Activated CD4-positive, alpha-beta T cell treated with anti-CD3 and anti-CD28 coated beads, Interleukin-2, amount 10 ng/mL, durations not matched to agents 24 days and 14 days (primary cell): ENCODE measurements at regions of chr20 and their contacts with region 1.

Region 1: DNA sequence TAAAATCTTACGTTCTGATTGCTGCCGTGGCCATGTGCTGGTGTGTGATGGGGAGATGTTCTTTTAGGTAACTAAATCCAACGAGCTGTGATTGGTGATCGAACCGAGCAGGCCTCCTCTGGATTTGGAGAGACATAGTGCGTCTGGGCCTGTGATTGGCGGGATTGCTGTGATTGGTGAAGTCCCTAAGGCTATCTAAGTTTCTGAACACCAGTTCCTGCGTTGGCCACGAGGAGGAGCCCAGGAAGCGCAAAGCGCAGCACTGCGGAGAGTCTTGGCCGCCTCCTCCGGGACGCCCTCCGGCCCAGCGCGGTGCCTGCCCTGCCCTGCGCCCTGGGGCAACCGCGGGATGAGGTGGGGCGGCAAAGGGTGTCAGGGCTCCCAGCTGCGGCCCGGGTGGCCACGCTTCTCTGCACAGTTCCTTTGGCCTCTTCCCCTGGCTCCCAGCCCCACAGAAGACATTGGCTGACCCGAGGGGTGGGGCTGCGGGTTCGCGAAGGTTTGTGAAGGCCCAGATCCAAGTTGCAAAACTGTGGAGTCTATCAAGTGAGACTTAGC is 33.0 kb downstream of the HNF4A start:
- DNase-seq: peak; percentile 91
- H3K4me3 Mint-ChIP-seq: no peak overlapping the region
- H3K27ac Mint-ChIP-seq: no peak overlapping the region
- H3K4me1 Mint-ChIP-seq: peaks cover 3% of the 10 kb centered on the region
- H3K27me3 Mint-ChIP-seq: peaks cover 6% of the 10 kb centered on the region

Region 2: DNA sequence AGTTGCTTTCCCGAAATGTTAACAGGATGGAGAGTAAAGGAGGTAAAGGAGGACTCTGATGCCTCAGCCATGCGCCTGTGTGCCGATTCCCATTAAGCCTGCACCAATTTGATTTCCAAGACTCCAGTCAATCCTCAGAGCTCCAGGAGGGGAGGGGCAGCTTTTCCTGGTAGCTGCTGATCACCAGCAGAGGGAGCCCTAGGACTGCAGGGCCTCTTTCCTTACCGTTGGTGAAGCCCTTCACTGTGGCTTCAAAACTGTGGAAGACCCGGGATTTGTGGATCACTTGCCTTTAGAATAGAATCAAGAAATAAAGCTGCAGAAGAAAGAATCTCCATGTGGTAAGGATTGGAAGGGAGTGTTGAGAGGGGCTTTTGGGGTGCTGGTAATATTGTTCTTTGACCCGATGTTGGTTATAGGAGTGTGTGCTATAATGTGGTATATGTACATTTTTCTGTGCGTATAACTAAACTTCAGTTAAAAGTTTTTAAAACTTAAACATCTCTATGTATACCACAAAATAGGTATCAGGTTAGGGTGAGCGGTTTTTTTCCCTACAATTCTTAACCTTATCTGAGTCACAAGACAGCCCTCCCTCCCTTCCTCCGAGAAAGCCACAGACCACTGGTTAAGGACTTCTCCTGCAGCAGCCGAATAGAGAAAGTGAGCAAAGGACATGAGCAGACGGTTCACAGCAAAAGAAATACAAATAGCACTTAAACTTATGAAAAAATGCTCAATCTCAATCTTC is 171.0 kb before region 1 on chr20:
- intact Hi-C with region 1: loop called (anchors 1 kb)
- DNase-seq: peak; percentile 92
- H3K4me3 Mint-ChIP-seq: peak overlapping the region; percentile 77
- H3K27ac Mint-ChIP-seq: peak overlapping the region; percentile 63
- H3K4me1 Mint-ChIP-seq: peaks cover 30% of the 10 kb centered on the region
- H3K27me3 Mint-ChIP-seq: no peaks in the 10 kb centered on the region

Region 3: GRCh38 chr20:44370639-44371220 is 17.8 kb before region 1 on chr20:
- intact Hi-C with region 1: no loop called
- DNase-seq: no peak
- H3K4me3 Mint-ChIP-seq: no peak overlapping the region
- H3K27ac Mint-ChIP-seq: no peak overlapping the region
- H3K4me1 Mint-ChIP-seq: no peaks in the 10 kb centered on the region
- H3K27me3 Mint-ChIP-seq: peaks cover 11% of the 10 kb centered on the region

Region 4: DNA sequence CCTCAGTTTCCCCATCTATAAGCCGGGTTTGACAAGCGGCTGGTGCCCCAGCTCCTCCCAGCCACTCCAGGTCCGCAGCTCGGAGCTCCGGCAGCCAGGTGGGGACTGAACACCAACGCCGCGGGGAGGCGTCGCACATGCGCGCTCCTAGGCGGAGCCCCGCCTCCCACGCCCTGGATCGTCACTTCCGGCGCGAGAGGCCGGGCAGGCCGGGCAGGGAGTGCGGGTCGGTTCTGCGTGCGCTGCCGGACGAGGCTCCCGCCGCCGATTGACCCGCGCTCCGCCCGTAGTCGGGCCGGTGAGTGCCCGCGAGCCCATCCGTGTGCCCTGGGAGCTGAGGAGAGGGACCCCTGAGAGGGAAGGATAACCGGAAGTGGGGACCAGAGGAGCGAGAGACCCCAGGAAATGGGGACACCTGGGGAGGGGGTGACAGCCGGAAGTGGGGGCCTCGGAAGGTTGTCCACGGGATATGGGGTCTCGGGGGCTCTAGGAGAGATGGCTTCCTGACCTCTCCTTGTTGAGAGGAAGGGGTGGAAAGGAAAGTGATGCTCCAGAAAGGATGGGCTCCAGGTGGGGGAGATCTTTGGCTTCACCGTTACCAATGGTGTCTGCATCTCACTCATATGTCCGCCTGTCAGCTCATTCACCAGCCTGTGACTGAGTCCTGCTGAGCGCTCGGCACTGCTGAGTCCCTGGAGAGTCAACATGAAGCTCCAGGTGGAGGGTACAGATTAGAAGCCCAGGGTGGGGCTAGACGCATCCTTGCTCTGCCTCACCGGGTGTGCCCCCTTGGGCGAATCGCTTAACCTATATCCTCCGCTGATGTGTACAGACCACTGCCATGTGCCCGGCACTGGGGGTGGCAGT is 87.4 kb after region 1 on chr20 and contains the start of gene TTPAL:
- intact Hi-C with region 1: loop called (anchors 10 kb)
- DNase-seq: peak; percentile 98
- H3K4me3 Mint-ChIP-seq: peak within 1 kb of the TSS; percentile 99
- H3K27ac Mint-ChIP-seq: peak within 1 kb of the TSS; percentile 99
- H3K4me1 Mint-ChIP-seq: peaks cover 12% of the 10 kb centered on the region
- H3K27me3 Mint-ChIP-seq: no peaks in the 10 kb centered on the region
- total RNA-seq, gene TTPAL: 22.6 and 23.2 TPM in 2 replicates

Region 5: DNA sequence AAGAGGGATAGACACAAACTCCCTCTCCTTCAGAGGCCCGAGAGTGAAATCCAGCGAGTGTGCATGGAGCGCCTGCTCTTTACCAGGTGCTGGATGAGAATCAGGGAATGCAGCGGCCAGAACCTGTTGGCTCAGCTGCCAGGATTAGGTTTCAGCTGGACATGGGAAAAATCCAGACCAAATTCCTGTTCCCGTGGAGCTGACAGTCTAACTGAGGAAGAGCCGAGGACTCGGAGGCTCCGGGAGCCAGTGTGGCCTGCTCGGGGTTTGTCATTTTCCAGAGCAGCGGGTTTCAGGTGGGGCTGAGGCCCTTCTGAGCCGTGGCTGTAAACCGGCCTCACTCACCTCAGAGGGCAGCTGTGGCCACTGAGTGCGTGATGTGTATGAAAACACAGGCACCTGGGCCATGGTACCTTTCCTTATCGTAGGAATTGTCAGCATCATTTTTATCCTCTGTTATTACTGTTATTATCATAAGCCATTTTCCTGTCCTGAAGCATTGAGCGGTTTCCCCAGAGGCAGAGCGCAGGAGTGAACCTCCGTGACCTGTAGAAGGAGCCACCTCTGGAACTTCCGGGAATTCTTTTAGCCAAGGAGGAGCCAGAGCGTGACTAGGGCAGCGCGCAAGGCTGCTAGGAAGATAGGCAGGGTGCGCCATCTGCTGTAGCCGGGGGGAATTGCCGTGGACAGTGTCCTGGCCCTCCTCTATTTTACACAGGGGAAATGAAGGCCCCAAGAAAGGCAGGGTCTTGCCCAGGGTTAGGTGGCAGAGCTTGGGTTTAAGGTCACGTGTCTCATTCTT is 221.2 kb after region 1 on chr20:
- intact Hi-C with region 1: loop called (anchors 1 kb)
- DNase-seq: peak; percentile 95
- H3K4me3 Mint-ChIP-seq: peak overlapping the region; percentile 64
- H3K27ac Mint-ChIP-seq: peak overlapping the region; percentile 82
- H3K4me1 Mint-ChIP-seq: peaks cover 8% of the 10 kb centered on the region
- H3K27me3 Mint-ChIP-seq: no peaks in the 10 kb centered on the region

Region 6: GRCh38 chr20:44683263-44684046 is 294.9 kb after region 1 on chr20:
- intact Hi-C with region 1: loop called (anchors 10 kb)
- DNase-seq: peak; percentile 85
- H3K4me3 Mint-ChIP-seq: no peak overlapping the region
- H3K27ac Mint-ChIP-seq: no peak overlapping the region
- H3K4me1 Mint-ChIP-seq: peaks cover 7% of the 10 kb centered on the region
- H3K27me3 Mint-ChIP-seq: peaks cover 2% of the 10 kb centered on the region

Region 7: DNA sequence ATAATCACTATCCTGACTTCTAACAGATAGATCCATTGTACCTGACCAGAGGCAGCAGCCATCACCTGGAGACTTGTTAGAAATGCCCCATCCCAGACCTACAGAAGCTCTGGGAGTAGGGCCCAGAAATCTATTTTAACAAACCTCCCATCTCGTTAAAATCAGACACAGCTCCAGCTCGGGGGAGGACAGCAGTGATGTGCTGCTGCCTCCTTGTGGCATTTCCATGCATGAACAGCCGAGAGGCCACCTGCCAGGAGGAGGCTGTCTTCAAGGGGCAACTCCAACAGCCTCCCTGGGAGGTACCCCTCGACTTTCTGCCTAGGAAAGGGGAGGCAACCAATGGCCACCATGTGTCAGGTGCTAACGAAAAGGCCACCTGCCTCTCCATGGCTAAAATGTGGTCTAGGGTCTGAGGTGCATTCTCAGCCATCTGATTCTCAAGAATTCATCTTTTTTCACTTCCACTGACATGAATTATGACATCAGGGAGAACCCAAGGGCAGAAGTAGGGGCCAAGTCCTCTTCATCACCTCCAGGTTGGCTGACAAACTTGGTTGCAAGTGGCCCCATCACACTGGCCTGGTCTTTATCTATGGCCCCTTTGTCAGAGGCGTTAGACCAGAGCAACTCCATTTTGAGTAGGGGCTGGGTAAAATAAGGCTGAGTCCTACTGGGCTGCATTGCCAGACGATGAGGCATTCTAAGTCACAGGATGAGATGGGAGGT is 345.0 kb after region 1 on chr20:
- intact Hi-C with region 1: loop called (anchors 2 kb)
- DNase-seq: peak; percentile 90
- H3K4me3 Mint-ChIP-seq: no peak overlapping the region
- H3K27ac Mint-ChIP-seq: no peak overlapping the region
- H3K4me1 Mint-ChIP-seq: peaks cover 24% of the 10 kb centered on the region
- H3K27me3 Mint-ChIP-seq: no peaks in the 10 kb centered on the region

Region 8: DNA sequence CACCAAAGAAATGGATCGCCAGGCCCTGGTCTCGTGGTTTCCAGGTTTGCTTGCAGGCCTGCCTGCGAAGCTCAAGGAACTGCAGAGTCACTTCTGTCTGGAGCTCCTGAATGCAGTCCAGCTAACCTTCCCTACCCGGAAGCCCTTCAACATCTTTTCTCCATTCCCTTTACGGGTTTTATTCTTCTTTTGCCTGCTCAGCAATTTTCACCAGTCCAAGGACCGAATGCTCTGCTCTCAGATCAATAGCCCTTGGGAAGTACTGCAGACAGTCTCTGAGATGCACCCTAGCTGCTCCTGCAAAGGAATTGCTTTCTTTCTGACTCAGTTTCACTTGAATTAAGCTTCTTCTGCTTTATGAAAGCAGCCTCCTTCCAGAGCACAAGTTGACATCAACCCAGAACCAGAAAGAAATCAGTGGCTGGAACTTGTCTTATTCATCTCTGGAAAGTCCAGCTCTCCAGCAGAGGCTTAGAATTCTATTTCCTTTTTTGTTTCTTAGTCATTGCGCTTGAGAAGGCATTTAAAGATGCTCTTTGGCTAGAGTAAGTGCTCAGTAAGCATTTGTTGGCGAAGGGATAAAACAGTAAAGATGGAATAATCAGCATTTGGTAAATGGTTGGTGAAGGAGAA is 478.3 kb after region 1 on chr20:
- intact Hi-C with region 1: loop called (anchors 5 kb)
- DNase-seq: no peak
- H3K4me3 Mint-ChIP-seq: peak overlapping the region; percentile 55
- H3K27ac Mint-ChIP-seq: no peak overlapping the region
- H3K4me1 Mint-ChIP-seq: peaks cover 9% of the 10 kb centered on the region
- H3K27me3 Mint-ChIP-seq: peaks cover 24% of the 10 kb centered on the region